OCI-LY7 (cell line): ENCODE measurements at regions of chr6 and their contacts with region 1.

Region 1: GRCh38 chr6:162005372-162005771 is 722.2 kb downstream of the PRKN start:
- DNase-seq: no peak
- H3K4me3 ChIP-seq: no peak overlapping the region
- H3K27ac ChIP-seq: no peak overlapping the region
- H3K4me1 ChIP-seq: no peaks in the 10 kb centered on the region
- CTCF ChIP-seq: no peak

Region 2: GRCh38 chr6:161200610-161201370 is 804.6 kb before region 1 on chr6:
- CTCF ChIA-PET with region 1: no interaction called
- POLR2A ChIA-PET with region 1: no interaction called
- intact Hi-C with region 1: no loop called
- DNase-seq: no peak
- H3K4me3 ChIP-seq: no peak overlapping the region
- H3K27ac ChIP-seq: no peak overlapping the region
- H3K4me1 ChIP-seq: no peaks in the 10 kb centered on the region
- CTCF ChIP-seq: peak; percentile 28; the same call in 1 of the 2 replicates

Region 3: DNA sequence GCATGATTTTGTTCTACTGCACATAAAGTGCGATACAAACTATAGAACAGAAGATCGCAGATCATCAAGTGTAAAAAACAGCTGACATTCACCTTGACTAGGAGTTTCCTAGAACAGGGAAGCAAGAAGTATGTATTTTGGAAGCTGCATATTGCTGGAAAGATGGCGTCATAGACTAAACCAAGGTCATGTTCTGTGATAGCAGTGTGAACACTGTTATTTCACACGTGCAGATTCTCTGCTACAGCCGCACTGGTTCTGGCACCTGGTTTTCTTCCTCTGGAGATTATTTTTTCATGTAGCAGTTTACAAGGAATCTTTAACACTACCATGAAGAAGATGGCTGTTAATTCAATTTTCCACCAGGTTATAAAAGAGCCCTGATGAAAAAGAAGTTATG is 41.0 kb after region 1 on chr6:
- CTCF ChIA-PET with region 1: no interaction called
- POLR2A ChIA-PET with region 1: no interaction called
- intact Hi-C with region 1: no loop called
- DNase-seq: no peak
- H3K4me3 ChIP-seq: no peak overlapping the region
- H3K27ac ChIP-seq: no peak overlapping the region
- H3K4me1 ChIP-seq: no peaks in the 10 kb centered on the region
- CTCF ChIP-seq: no peak

Region 4: GRCh38 chr6:162165479-162165878 is 160.1 kb after region 1 on chr6:
- CTCF ChIA-PET with region 1: no interaction called
- POLR2A ChIA-PET with region 1: interaction called, 11 read pairs
- intact Hi-C with region 1: no loop called
- DNase-seq: no peak
- H3K4me3 ChIP-seq: no peak overlapping the region
- H3K27ac ChIP-seq: no peak overlapping the region
- H3K4me1 ChIP-seq: no peaks in the 10 kb centered on the region
- CTCF ChIP-seq: no peak